CD4-positive, alpha-beta T cell (primary cell): ENCODE measurements at regions of chr10 and their contacts with region 1.

Region 1: GRCh38 chr10:33052263-33052875 is 94.3 kb upstream of the ITGB1 start:
- DNase-seq: no peak
- ATAC-seq: no peak
- H3K4me3 ChIP-seq: peak overlapping the region; percentile 52
- H3K4me3 Mint-ChIP-seq: peak overlapping the region; percentile 7
- H3K27ac ChIP-seq: no peak overlapping the region
- H3K27ac Mint-ChIP-seq: no peak overlapping the region
- H3K4me1 ChIP-seq: peaks cover 3% of the 10 kb centered on the region
- H3K4me1 Mint-ChIP-seq: peaks cover 17% of the 10 kb centered on the region
- H3K27me3 ChIP-seq: no peaks in the 10 kb centered on the region
- H3K27me3 Mint-ChIP-seq: no peaks in the 10 kb centered on the region
- CTCF ChIP-seq: no peak

Region 2: DNA sequence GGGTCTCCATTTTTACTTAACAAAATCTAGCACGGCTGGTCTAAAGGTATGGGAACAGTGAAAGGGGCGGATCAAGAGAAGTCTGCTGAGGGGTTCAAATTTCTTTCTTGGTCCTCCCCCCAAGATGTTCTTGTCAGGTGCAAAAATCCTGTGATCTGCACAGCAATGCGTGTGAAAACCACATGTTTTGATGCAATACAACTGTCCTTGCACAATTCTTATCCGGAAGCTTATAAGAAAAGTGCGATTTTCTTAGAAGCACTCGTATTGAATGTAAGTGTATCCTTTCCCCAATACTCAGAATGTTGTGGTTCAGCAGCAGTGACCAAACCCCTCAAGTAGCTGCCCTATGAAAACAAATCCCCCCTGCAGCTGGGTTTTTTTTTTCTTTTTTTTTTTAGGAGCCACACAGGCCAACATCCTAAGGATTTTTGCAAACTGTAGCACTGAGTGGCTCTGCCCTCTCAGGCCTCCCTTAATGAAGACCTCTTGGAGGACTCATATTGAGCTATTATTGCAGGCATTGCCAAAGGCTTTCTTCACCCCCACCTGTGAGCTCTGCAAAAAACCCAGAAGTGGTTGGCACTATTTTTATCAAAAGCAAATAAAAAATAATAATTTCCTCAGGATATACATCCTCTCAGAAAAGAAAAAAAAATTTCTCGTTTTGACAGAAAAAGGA is 57.6 kb after region 1 on chr10:
- CTCF ChIA-PET with region 1: no interaction called
- POLR2A ChIA-PET with region 1: interaction called, 4 read pairs
- intact Hi-C with region 1: loop called in 1 of 2 experiments (anchors 5 kb)
- DNase-seq: peak in 3 of 14 experiments; percentile 58 to 83 (median 61)
- ATAC-seq: peak; percentile 37
- H3K4me3 ChIP-seq: peak overlapping the region; percentile 7
- H3K4me3 Mint-ChIP-seq: peak overlapping the region; percentile 3
- H3K27ac ChIP-seq: peak overlapping the region; percentile 48 to 79
- H3K27ac Mint-ChIP-seq: peak overlapping the region; percentile 75
- H3K4me1 ChIP-seq: peaks cover 80% of the 10 kb centered on the region
- H3K4me1 Mint-ChIP-seq: peaks cover 72% of the 10 kb centered on the region
- H3K27me3 ChIP-seq: no peaks in the 10 kb centered on the region
- H3K27me3 Mint-ChIP-seq: no peaks in the 10 kb centered on the region
- CTCF ChIP-seq: no peak